ENCODE measurements at regions of chr11 and their contacts with region 1.

Region 1: GRCh38 chr11:65720237-65720934 is at the start of gene RNASEH2C:
- DNase-seq: peak; percentile 82 to 89 (median 85)
- H3K4me3 ChIP-seq: peak within 1 kb of the TSS; percentile 32 to 93 (median 62)
- H3K27ac ChIP-seq: peak within 1 kb of the TSS; percentile 10 to 96 (median 72)
- H3K4me1 ChIP-seq: peaks cover 17 to 21% of the 10 kb centered on the region in 2 donors
- H3K27me3 ChIP-seq: no peaks in the 10 kb centered on the region
- CTCF ChIP-seq: no peak
- POLR2A ChIP-seq: peak; percentile 64 to 86
- total RNA-seq, gene RNASEH2C: 69.7 to 170 (median 112) TPM

Region 2: GRCh38 chr11:65558002-65558931 is 162.1 kb before region 1 on chr11 and contains the start of gene LTBP3:
- intact Hi-C with region 1: no loop called
- DNase-seq: peak; percentile 82 to 88 (median 86)
- H3K4me3 ChIP-seq: peak within 1 kb of the TSS in 2 of 4 donors; percentile 44 to 82
- H3K27ac ChIP-seq: peak within 1 kb of the TSS; percentile 86 to 96 (median 88)
- H3K4me1 ChIP-seq: peaks cover 40 to 61% of the 10 kb centered on the region in 2 donors
- H3K27me3 ChIP-seq: no peaks in the 10 kb centered on the region
- CTCF ChIP-seq: no peak
- POLR2A ChIP-seq: peak in 1 of 2 donors; percentile 56
- total RNA-seq, gene LTBP3: 43.4 to 362 (median 218) TPM

Region 3: DNA sequence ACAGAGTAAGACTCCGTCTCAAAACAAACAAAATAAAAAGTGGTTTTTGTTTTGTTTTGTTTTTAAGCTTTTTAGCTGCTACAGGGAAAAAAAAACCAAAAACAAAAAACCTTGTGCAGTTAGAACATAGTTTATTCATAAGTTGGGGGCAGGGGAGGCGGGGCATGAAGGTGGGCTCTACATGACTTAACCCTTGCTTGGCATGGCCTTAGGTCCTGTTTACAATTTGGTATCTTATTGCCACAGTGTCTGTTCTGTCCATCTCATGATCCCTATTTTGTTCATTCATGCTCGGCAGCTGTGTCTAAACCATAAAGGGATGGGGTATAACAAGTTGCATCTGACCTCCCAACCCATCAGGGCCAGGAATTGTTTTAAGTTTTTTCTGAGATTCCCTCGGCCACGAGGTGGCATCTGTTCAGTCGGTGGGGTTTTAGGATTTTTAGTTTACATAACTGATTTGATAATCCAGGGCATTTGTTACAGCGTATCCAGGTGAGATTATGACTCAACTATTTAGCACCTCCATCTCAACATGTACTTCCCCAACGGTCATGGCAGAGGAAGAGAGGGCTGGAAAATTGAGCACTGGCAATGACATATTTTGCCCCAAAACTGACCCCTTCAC is 53.5 kb after region 1 on chr11:
- intact Hi-C with region 1: loop called (anchors 5 kb)
- DNase-seq: peak in 2 of 7 donors; percentile 21 to 35
- H3K4me3 ChIP-seq: no peak overlapping the region
- H3K27ac ChIP-seq: no peak overlapping the region
- H3K4me1 ChIP-seq: peaks cover 3 to 4% of the 10 kb centered on the region in 2 donors
- H3K27me3 ChIP-seq: no peaks in the 10 kb centered on the region
- CTCF ChIP-seq: peak in 2 of 6 experiments; percentile 10 to 17
- POLR2A ChIP-seq: no peak

Region 4: DNA sequence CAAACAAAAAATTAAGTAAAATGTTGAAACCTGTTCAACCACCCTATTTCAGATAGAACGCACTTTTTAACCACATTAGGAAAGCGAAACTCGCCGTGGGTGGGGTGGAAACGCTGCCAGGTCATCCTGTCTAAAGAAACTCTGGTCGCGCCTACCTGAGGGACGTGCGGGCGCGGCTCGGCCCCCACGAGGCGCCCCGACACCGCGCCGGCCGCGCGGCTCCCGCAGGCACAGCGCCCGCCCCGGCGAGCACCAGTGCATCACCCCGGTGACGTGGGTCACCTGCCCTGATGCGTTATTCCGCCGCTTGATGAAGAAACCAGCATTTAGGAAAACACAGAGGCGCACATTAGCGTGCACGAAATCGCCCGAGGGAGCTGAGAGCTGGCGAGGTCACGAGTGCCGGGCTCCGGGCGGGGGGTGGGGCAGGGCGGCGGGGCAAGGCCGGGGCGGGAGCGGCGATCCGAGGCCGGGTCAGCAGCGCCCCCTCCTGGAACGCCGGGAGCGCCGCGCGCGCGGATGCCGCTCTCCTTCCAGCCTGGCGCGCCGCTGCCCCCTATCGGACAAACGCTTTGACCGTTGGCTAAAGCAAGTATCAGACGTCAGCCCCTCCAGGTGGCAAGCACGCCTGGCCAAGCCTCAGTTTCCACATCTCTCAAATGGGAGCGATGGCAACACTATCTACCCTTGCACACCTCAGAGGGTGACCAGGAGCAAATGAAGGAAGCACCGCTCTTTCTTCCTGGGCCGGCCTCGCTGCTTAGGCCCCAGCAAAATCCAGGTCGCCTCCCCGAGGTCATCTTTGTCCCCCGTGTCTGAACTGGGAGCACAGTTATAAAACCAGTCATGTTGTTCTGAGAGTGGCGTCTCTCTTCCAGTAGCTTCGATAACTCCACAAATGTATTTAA is 97.7 kb after region 1 on chr11:
- intact Hi-C with region 1: loop called in 1 of 2 experiments (anchors 5 kb)
- DNase-seq: peak; percentile 89 to 96 (median 95)
- H3K4me3 ChIP-seq: peak overlapping the region in 3 of 4 donors; percentile 29 to 73 (median 48)
- H3K27ac ChIP-seq: peak overlapping the region in 4 of 5 donors; percentile 20 to 83 (median 73)
- H3K4me1 ChIP-seq: peaks cover 0 to 12% of the 10 kb centered on the region in 2 donors
- H3K27me3 ChIP-seq: no peaks in the 10 kb centered on the region
- CTCF ChIP-seq: peak; percentile 79 to 100 (median 94)
- POLR2A ChIP-seq: peak in 1 of 2 donors; percentile 8

Region 5: GRCh38 chr11:65988791-65989592 is 268.6 kb after region 1 on chr11:
- intact Hi-C with region 1: loop called in 1 of 2 experiments (anchors 10 kb)
- DNase-seq: peak; percentile 88 to 98 (median 93)
- H3K4me3 ChIP-seq: no peak overlapping the region
- H3K27ac ChIP-seq: no peak overlapping the region
- H3K4me1 ChIP-seq: no peaks in the 10 kb centered on the region
- H3K27me3 ChIP-seq: no peaks in the 10 kb centered on the region
- CTCF ChIP-seq: peak; percentile 90 to 100 (median 99)
- POLR2A ChIP-seq: no peak